ENCODE measurements at regions of chr10 and their contacts with region 1.

Region 1: DNA sequence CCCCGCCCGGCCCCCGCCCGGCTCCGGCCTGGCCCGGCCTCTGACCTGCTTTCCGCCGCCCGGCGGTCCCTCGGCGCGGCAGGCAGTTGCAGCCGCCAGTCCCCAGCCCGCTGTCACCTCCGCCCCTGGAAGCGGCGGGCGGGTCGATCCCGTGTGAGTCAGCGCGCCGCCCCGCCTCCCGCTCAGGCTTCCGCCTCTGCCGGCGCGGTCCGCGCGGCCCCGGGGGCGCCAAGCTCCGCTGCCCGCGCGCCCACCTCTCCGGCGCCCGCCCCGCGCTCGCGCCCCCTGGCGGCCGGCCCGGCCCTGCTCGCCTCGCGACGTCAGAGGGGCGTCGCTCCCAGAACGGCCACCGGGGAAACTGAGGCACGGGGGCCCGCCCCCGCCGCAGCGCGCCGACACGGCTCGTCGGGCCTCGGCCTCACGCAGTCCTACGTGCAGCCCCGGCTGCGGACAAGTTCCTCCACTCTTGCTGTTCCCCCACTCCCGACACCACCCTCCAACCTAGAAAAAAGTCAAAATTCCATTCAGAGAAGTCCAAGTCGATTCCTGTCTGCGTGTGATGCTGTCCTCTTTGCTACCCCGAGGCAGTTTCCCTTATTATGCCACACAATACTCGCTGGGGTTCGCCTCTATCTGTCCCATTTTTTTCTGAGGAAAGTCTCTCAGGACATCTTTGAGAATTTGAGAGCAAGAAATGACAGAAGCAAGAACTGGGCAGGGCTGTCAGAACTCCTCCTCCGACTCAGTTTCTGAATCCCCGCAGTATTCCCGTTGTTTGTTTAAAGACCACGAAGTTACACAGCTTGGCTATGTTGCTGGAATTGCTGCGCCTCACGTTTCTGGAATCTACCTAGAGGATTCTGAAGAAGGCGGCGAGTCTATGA is at the start of gene DNMBP:
- DNase-seq: peak; percentile 54 to 92 (median 78)
- ATAC-seq: peak; percentile 92
- H3K4me3 ChIP-seq: peak within 1 kb of the TSS; percentile 87
- H3K4me3 Mint-ChIP-seq: peak within 1 kb of the TSS; percentile 95
- H3K27ac ChIP-seq: peak within 1 kb of the TSS in 1 of 2 donors; percentile 23
- H3K27ac Mint-ChIP-seq: peak within 1 kb of the TSS; percentile 42
- H3K4me1 ChIP-seq: peaks cover 13% of the 10 kb centered on the region
- H3K4me1 Mint-ChIP-seq: peaks cover 55% of the 10 kb centered on the region
- H3K27me3 ChIP-seq: no peaks in the 10 kb centered on the region
- H3K27me3 Mint-ChIP-seq: no peaks in the 10 kb centered on the region
- CTCF ChIP-seq: peak; percentile 29
- total RNA-seq, gene DNMBP: 2.2 to 2.3 TPM

Region 2: GRCh38 chr10:99621454-99622251 is 388.4 kb before region 1 on chr10:
- CTCF ChIA-PET with region 1: no interaction called
- POLR2A ChIA-PET with region 1: no interaction called
- intact Hi-C with region 1: no loop called
- DNase-seq: peak in 1 of 14 experiments; percentile 28
- ATAC-seq: no peak
- H3K4me3 ChIP-seq: peak overlapping the region; percentile 82
- H3K4me3 Mint-ChIP-seq: peak overlapping the region; percentile 91
- H3K27ac ChIP-seq: peak overlapping the region; percentile 93 to 96
- H3K27ac Mint-ChIP-seq: peak overlapping the region; percentile 91
- H3K4me1 ChIP-seq: peaks cover 19% of the 10 kb centered on the region
- H3K4me1 Mint-ChIP-seq: peaks cover 44% of the 10 kb centered on the region
- H3K27me3 ChIP-seq: no peaks in the 10 kb centered on the region
- H3K27me3 Mint-ChIP-seq: no peaks in the 10 kb centered on the region
- CTCF ChIP-seq: no peak

Region 3: GRCh38 chr10:99732033-99732912 is 277.8 kb before region 1 on chr10 and contains the starts of genes COX15 and CUTC:
- CTCF ChIA-PET with region 1: interaction called, 5 read pairs
- POLR2A ChIA-PET with region 1: interaction called, 7 read pairs
- intact Hi-C with region 1: loop called in 1 of 2 experiments (anchors 5 kb)
- DNase-seq: peak; percentile 89 to 98 (median 93)
- ATAC-seq: peak; percentile 89
- H3K4me3 ChIP-seq: peak within 1 kb of the TSS; percentile 82
- H3K4me3 Mint-ChIP-seq: peak within 1 kb of the TSS; percentile 98
- H3K27ac ChIP-seq: peak within 1 kb of the TSS; percentile 86 to 87
- H3K27ac Mint-ChIP-seq: peak within 1 kb of the TSS; percentile 91
- H3K4me1 ChIP-seq: peaks cover 26% of the 10 kb centered on the region
- H3K4me1 Mint-ChIP-seq: peaks cover 48% of the 10 kb centered on the region
- H3K27me3 ChIP-seq: no peaks in the 10 kb centered on the region
- H3K27me3 Mint-ChIP-seq: no peaks in the 10 kb centered on the region
- CTCF ChIP-seq: peak; percentile 6
- total RNA-seq, gene COX15: 7.7 to 7.9 TPM
- total RNA-seq, gene CUTC: 14.1 to 16.0 TPM

Region 4: DNA sequence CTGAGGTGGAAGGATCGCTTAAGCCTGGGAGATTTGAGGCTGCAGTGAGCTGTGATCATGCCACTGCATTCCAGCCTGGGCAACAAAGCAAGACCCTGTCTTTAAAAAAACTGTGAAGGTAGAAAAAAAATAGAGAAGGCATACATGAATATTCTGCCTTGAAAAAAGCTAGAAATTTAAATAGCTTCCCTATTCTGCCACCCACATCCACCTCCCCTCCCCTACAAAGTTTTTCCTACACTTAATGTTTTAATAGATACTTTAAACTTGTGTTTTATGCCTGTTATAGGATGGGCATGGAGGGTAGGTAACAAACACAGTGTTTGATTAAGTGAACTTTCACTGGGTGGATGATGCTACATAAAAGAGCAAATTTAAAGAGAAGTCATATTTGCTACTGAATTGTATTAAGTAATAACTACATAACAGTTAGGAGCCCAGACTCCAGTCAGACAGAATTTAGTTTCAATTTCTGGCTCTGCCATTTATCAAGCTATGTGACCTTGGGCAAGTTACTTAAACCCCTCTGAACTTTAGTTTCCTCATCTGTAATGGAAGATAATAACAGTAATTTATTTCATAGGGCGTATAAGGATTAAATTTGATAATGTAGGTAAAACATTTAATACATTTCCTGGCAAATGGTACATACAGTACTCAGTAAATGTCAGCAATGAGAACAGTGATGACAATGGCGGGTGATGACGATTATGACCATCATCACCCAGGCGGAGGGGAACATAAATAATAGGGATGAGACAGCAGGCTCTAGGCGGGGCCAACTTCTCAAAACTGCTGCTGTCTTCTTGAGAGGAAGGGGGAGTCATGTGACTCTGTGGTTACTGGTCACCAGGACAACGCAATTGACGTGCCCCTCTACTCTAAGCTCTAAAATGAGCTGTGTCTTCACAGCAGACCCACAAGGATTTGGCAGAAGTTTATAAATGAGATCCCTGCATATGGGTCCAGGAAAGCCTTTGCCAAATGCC is 16.0 kb before region 1 on chr10:
- CTCF ChIA-PET with region 1: interaction called, 14 read pairs
- POLR2A ChIA-PET with region 1: no interaction called
- intact Hi-C with region 1: no loop called
- DNase-seq: peak in 11 of 14 experiments; percentile 11 to 81 (median 39)
- ATAC-seq: peak; percentile 91
- H3K4me3 ChIP-seq: no peak overlapping the region
- H3K4me3 Mint-ChIP-seq: no peak overlapping the region
- H3K27ac ChIP-seq: peak overlapping the region in 1 of 2 donors; percentile 25
- H3K27ac Mint-ChIP-seq: peak overlapping the region; percentile 52
- H3K4me1 ChIP-seq: peaks cover 6% of the 10 kb centered on the region
- H3K4me1 Mint-ChIP-seq: peaks cover 14% of the 10 kb centered on the region
- H3K27me3 ChIP-seq: no peaks in the 10 kb centered on the region
- H3K27me3 Mint-ChIP-seq: no peaks in the 10 kb centered on the region
- CTCF ChIP-seq: no peak

Region 5: DNA sequence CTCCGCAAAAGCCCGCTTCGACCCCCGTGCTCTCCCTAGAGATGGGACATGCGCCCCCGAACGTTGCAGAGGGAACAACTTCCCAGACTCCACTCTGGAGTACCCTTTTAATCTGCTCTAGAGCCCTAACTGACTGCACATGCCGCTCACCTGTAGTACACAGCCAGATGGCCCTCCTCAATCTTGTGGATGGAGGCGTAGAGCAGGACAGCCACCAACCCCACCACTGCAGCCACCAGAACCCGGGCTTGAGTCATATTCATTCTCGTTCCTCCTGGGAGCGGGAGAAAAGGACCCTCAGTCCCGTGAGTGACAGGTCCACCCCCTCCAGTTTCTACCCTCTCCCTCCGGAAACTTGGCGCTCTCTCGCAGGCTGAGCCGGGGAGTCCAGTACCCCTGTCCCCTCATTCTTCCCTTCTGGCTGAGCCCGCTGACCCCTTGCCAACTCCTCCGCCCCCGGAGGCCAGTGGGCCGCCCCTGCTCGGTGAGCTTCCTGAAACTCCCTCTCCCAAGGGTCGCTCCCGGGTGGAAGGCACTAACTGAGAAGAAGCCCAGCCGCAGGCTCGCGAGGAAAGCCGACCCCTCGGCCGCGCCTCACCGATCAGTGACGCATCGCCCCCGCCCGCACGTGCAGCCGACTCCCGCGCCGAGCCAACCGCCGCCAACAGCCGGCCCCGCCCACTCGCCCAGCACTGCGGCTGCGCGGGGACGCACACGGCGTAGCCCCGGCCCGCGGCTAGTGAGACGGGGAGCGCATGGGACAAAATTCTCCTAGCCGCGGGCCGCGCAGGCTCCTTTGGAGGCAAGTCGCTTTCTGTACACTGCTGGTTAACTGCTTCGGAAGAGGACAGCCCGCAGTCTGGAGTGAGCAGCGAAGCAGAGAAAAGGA is 175.6 kb after region 1 on chr10 and contains the start of gene ERLIN1:
- CTCF ChIA-PET with region 1: no interaction called
- POLR2A ChIA-PET with region 1: no interaction called
- intact Hi-C with region 1: loop called in 1 of 2 experiments (anchors 5 kb)
- DNase-seq: peak; percentile 82 to 96 (median 90)
- ATAC-seq: peak; percentile 92
- H3K4me3 ChIP-seq: peak within 1 kb of the TSS; percentile 80
- H3K4me3 Mint-ChIP-seq: peak within 1 kb of the TSS; percentile 98
- H3K27ac ChIP-seq: peak within 1 kb of the TSS; percentile 72 to 81
- H3K27ac Mint-ChIP-seq: peak within 1 kb of the TSS; percentile 92
- H3K4me1 ChIP-seq: peaks cover 22% of the 10 kb centered on the region
- H3K4me1 Mint-ChIP-seq: peaks cover 73% of the 10 kb centered on the region
- H3K27me3 ChIP-seq: no peaks in the 10 kb centered on the region
- H3K27me3 Mint-ChIP-seq: no peaks in the 10 kb centered on the region
- CTCF ChIP-seq: no peak
- total RNA-seq, gene ERLIN1: 1.5 to 2.9 TPM